Activated B cell treated with CpG ODN at 0.5 μM for 24 hours (primary cell): ENCODE measurements at regions of chr9 and their contacts with region 1.

Region 1: DNA sequence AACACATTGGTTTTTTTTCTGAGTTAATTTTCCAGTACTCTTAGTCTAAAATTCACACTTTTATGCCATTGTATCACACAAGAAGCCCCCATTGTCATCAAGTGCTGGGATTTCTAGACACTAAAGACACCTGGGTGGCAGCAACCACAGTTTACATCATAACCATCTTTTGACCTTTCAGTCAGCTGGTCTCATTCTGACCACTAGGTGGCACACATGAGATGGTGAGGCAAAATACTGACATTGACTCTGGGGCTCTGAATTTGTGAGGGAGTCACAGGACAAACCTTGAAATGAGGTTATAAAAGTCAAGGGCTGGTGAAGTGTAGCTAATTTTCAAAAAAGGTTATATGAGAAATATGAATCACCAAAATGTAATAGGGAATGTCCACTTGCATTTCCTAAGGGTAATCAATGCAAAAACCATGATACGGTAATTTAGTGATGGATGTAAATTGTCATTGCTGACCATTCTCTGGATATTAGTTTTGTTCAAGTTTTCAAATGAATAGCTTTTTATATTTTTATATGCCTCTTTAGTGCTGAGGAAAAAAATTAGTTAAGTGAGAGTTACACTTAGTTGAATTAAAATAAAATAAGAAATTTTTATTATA is 229.4 kb downstream of the DMAC1 start:
- DNase-seq: no peak
- ATAC-seq: peak; percentile 31
- H3K4me3 Mint-ChIP-seq: no peak overlapping the region
- H3K27ac Mint-ChIP-seq: no peak overlapping the region
- H3K4me1 Mint-ChIP-seq: no peaks in the 10 kb centered on the region
- H3K27me3 Mint-ChIP-seq: peaks cover 6% of the 10 kb centered on the region
- CTCF ChIP-seq: peak; percentile 33

Region 2: DNA sequence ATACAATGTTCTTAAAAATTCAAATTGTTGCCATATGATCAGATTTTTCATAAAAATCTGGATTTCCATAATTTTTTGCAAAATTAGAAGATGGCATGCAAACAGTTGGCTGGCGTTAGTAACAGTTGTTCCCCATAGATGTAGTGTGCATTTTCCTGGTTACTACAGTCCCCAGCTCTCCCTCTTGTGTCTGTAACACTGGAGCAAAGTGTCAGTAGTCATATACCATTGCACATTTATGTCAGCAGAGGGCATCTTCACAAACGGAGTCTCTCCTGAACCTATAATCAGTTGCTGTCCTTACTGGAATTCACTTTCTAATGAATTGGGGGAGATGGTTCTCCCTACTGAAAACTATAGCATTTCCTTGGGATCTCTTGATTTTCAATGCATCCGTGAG is 274.0 kb after region 1 on chr9:
- CTCF ChIA-PET with region 1: no interaction called
- POLR2A ChIA-PET with region 1: no interaction called
- intact Hi-C with region 1: loop called (anchors 1 kb)
- DNase-seq: no peak
- ATAC-seq: no peak
- H3K4me3 Mint-ChIP-seq: no peak overlapping the region
- H3K27ac Mint-ChIP-seq: no peak overlapping the region
- H3K4me1 Mint-ChIP-seq: peaks cover 5% of the 10 kb centered on the region
- H3K27me3 Mint-ChIP-seq: no peaks in the 10 kb centered on the region
- CTCF ChIP-seq: no peak

Region 3: DNA sequence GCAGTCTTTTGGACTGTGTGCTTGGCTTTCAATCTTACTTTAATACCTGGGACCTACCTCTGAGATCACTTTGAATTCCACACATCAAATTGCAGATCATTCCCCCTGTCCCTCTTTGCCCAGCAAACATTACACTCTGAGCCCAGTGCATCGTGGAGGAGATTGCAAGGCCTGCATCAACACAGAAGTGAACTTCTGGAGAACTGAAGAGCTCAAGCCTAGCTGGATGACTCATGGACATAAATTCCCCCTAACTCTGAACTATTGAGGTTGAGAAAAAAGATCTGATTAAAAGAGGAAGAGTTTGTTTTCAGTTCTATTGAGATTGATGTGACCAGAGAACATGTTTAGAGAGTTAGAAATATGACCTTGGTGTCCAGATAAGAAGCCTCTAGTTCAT is 545.4 kb after region 1 on chr9:
- CTCF ChIA-PET with region 1: no interaction called
- POLR2A ChIA-PET with region 1: no interaction called
- intact Hi-C with region 1: loop called (anchors 10 kb)
- DNase-seq: no peak
- ATAC-seq: no peak
- H3K4me3 Mint-ChIP-seq: no peak overlapping the region
- H3K27ac Mint-ChIP-seq: no peak overlapping the region
- H3K4me1 Mint-ChIP-seq: peaks cover 4% of the 10 kb centered on the region
- H3K27me3 Mint-ChIP-seq: no peaks in the 10 kb centered on the region
- CTCF ChIP-seq: no peak

Region 4: DNA sequence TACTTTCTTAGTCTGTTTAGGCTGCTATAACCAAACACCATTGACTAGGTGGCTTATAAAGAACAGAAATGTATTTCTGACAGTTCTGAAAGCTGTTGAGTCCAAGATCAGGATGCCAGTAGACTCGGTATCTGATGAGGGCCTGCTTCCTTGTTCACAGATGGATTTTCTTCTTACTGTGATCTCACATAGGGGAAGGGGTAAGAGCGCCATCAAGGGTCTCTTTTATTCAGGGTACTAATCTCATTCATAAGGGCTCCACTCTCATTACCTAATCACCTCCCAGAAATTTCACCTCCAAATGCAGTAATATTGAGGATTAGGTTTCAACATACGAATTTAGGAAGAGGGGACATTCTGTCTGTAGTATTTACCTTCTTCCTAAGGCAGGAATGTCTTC is 613.4 kb after region 1 on chr9:
- CTCF ChIA-PET with region 1: no interaction called
- POLR2A ChIA-PET with region 1: no interaction called
- intact Hi-C with region 1: loop called (anchors 1 kb)
- DNase-seq: no peak
- ATAC-seq: no peak
- H3K4me3 Mint-ChIP-seq: no peak overlapping the region
- H3K27ac Mint-ChIP-seq: no peak overlapping the region
- H3K4me1 Mint-ChIP-seq: peaks cover 4% of the 10 kb centered on the region
- H3K27me3 Mint-ChIP-seq: no peaks in the 10 kb centered on the region
- CTCF ChIP-seq: no peak